MCF 10A (cell line): ENCODE measurements at regions of chr2 and their contacts with region 1.

Region 1: DNA sequence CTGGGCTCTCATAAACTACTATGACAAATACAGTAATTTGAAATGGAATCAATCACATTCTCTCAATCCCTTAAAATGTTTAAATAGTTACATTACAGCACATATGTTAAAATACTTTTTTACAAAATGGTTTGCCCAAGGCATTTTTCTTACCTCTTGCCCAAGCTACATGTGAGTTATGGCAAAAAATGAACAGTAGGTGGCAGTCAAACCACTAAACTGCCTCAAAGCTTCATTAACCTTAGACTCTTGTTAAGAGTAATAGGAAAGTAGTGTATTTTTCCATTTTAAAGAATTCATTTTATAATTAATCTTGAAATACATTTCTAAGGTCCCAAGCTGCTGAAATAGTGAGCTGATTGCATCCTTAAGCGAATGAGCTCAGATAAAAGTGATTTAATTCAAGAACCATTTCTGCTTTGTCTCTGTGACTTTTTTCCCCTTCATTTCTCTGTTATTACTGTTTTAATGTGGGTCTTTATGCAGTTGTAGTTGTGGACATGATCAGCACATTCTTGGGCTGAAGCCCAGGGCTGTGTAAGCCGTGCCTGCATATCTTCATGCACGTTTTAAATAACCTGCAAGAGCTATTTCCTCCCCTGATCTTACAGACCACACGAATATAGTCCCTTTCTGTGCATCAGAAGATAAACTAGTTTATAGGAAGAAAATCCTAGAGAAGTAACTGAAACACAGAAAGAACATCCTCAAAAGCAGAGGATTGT is 311.8 kb downstream of the LNPK start:
- DNase-seq: peak; percentile 74
- H3K4me3 Mint-ChIP-seq: no peak overlapping the region
- H3K27ac Mint-ChIP-seq: no peak overlapping the region
- H3K4me1 Mint-ChIP-seq: no peaks in the 10 kb centered on the region
- H3K27me3 Mint-ChIP-seq: peaks cover 44% of the 10 kb centered on the region
- CTCF ChIP-seq: peak; percentile 57

Region 2: GRCh38 chr2:176079831-176080539 is 389.7 kb after region 1 on chr2:
- CTCF ChIA-PET with region 1: interaction called, 44 read pairs
- POLR2A ChIA-PET with region 1: interaction called, 3 read pairs
- intact Hi-C with region 1: no loop called
- DNase-seq: no peak
- H3K4me3 Mint-ChIP-seq: no peak overlapping the region
- H3K27ac Mint-ChIP-seq: no peak overlapping the region
- H3K4me1 Mint-ChIP-seq: no peaks in the 10 kb centered on the region
- H3K27me3 Mint-ChIP-seq: peaks cover 64% of the 10 kb centered on the region
- CTCF ChIP-seq: peak; percentile 30